IMR-90 (cell line): ENCODE measurements at regions of chr1 and their contacts with region 1.

Region 1: DNA sequence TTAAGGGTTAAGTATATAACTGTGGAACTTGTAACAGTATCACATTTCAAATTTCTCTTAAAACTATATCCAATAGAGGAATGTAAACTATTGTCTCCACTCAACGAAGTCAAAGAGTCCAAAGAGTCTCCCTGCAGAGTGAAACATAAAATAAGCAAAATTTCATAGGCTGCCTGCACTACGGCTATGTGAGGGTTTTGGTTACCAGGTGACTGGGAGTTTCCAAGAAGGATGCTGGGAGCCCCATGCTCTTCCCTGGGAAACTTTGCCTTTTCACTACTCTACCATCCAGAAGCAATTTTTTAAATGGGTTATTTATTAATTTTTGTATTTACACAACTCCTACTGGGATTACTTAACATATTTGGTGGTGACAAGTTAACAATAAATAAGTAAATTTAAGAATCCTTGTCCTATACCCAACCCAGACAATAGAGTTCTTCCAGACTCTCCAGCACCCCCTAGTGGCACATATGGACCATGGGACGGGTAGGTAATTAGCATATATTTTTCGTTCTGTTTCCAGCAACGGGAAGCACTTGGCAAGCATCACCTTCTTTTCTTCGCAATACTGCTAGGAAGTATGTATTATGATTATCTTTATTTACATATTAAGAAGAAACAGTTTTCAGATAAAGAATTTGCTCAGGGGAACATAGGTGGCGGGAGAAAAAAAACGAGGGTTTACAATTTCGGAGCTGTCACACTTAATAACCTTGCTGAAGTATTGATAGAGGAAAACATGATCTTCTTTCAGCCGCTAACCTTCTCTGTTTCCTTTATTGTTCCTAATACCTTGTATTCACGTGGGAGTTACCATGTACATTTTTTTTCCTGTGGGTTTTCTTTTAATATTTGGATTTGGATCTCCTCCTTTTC is 3.5 kb downstream of the FMO2 start:
- DNase-seq: peak; percentile 65
- ATAC-seq: peak; percentile 80
- H3K4me3 ChIP-seq: no peak overlapping the region
- H3K27ac ChIP-seq: peak overlapping the region; percentile 17; the same call in 1 of the 2 replicates
- H3K4me1 ChIP-seq: peaks cover 2% of the 10 kb centered on the region; the same call in 1 of the 2 replicates
- H3K27me3 ChIP-seq: no peaks in the 10 kb centered on the region
- CTCF ChIP-seq: peak; percentile 73
- POLR2A ChIP-seq: no peak
- RAD21 ChIP-seq: peak; percentile 64

Region 2: GRCh38 chr1:171127501-171127900 is 61.1 kb before region 1 on chr1:
- CTCF ChIA-PET with region 1: no interaction called
- POLR2A ChIA-PET with region 1: no interaction called
- dilution Hi-C with region 1: no loop called
- in situ Hi-C with region 1: no loop called
- intact Hi-C with region 1: no loop called
- DNase-seq: peak; percentile 85
- ATAC-seq: peak; percentile 87
- H3K4me3 ChIP-seq: no peak overlapping the region
- H3K27ac ChIP-seq: peak overlapping the region; percentile 97; the same call in 1 of the 2 replicates
- H3K4me1 ChIP-seq: peaks cover 10% of the 10 kb centered on the region
- H3K27me3 ChIP-seq: no peaks in the 10 kb centered on the region
- CTCF ChIP-seq: no peak
- POLR2A ChIP-seq: no peak
- RAD21 ChIP-seq: no peak

Region 3: DNA sequence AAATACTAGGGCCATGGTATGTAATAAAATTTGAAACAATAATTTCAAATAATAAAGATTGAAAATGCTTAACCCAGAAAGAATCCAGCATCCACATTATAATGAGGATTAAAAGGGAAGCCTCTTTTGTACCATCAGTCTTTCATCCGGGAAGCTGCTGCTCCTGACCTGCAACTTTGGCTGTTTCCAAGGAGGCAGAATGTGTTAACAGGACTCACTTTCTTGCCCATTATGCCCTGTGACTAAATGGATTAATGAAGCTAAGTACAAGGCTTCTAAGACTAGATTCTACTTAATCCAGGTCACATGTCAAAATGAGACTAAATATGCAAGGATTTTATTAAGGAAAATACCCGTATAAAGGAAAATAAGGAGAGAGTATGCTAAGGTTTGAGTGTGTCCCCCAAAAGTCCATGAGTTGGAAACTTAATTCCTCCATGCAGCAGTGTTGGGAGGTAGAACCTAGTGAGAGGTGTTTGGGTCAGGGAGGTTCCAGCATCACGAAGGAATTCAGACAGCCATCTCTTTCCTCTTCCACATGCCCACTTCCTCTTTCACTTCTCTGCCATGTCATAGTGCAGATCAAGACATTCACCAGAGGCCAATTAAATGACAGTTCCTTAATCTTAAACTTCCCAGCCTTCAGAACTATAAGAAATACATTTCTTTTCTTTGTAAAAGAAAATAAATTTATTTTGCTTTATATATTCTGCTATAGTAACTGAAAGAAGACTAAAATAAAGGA is 24.2 kb after region 1 on chr1:
- CTCF ChIA-PET with region 1: no interaction called
- POLR2A ChIA-PET with region 1: no interaction called
- dilution Hi-C with region 1: no loop called
- in situ Hi-C with region 1: no loop called
- intact Hi-C with region 1: no loop called
- DNase-seq: no peak
- ATAC-seq: no peak
- H3K4me3 ChIP-seq: no peak overlapping the region
- H3K27ac ChIP-seq: no peak overlapping the region
- H3K4me1 ChIP-seq: no peaks in the 10 kb centered on the region
- H3K27me3 ChIP-seq: no peaks in the 10 kb centered on the region
- CTCF ChIP-seq: no peak
- POLR2A ChIP-seq: no peak
- RAD21 ChIP-seq: no peak

Region 4: GRCh38 chr1:171226747-171227370 is 38.2 kb after region 1 on chr1:
- CTCF ChIA-PET with region 1: interaction called, 5 read pairs
- POLR2A ChIA-PET with region 1: no interaction called
- dilution Hi-C with region 1: no loop called
- in situ Hi-C with region 1: no loop called
- intact Hi-C with region 1: loop called (anchors 1 kb)
- DNase-seq: peak; percentile 80
- ATAC-seq: peak; percentile 93
- H3K4me3 ChIP-seq: no peak overlapping the region
- H3K27ac ChIP-seq: no peak overlapping the region
- H3K4me1 ChIP-seq: peaks cover 2% of the 10 kb centered on the region
- H3K27me3 ChIP-seq: no peaks in the 10 kb centered on the region
- CTCF ChIP-seq: peak; percentile 95
- POLR2A ChIP-seq: no peak
- RAD21 ChIP-seq: peak; percentile 99